Endothelial cell of umbilical vein (primary cell): ENCODE measurements at regions of chr15 and their contacts with region 1.

Region 1: DNA sequence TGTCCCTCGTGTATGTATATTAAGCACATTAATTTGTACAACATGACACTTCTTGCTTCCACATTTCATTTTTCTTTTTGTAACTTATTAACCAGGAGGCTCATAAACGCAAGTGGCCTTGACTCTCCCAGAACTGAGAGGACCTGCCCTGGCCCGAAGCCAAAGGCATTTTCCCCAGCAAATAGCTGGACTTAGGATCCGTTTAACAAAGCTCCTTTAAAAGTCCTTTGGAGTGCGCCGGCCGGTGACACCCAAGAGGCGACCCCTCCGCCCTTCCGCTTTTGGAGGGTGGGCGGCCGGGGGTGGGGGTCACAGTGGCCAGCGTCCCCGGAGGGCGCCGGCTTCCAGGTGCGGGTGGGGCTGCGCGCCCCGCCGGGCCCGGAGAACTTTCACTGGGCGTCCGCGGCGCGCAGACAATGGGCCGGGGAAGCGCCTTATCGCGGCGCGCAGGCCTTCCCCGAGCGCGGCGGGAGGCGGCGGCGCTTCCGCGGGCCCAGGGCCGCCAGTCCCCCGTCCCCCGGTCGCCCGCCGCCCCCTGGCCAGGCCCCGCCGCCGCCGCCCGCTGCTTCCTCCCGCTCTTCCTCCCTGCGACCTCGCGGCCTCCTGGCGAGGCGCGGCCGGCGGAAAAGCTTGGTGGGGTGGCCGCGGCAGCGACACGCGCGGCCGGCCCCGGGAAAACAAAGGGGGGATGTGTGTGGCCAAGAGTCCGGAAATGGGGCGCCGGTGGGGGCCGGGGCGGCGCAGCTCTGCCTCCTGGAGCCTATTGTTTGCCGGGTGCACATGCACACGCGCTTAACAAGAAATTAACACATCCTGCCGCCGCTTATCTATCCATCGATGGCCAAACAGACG is 613.4 kb downstream of the MCTP2 start:
- DNase-seq: peak; percentile 98
- H3K4me3 ChIP-seq: peak overlapping the region in 1 of 3 experiments; percentile 31
- H3K27ac ChIP-seq: peak overlapping the region; percentile 100
- H3K4me1 ChIP-seq: peaks cover 60% of the 10 kb centered on the region
- H3K27me3 ChIP-seq: no peaks in the 10 kb centered on the region
- CTCF ChIP-seq: peak in 1 of 2 donors; percentile 36
- POLR2A ChIP-seq: peak; percentile 62

Region 2: DNA sequence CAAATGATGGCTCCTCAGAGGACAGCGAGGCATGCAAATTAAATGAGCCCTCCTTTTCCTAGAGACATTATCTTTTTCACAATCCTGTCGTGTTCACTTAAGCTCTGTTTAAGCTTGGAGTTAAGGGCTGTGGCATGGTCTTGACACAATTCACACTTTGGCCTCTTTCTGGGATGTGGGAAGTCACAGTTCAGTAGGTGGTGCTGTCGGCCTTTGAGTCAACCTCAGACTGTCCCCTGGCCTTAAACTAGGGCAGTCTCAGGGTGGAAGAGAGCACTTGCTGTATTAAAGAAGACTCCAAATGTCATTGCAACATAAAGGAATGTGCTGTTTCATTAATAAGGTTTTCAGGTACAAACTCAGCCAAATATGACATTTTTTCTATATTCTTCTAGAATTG is 262.4 kb before region 1 on chr15:
- CTCF ChIA-PET with region 1: interaction called, 23 read pairs
- POLR2A ChIA-PET with region 1: no interaction called
- dilution Hi-C with region 1: no loop called
- intact Hi-C with region 1: loop called (anchors 1 kb)
- DNase-seq: peak; percentile 85
- H3K4me3 ChIP-seq: no peak overlapping the region
- H3K27ac ChIP-seq: no peak overlapping the region
- H3K4me1 ChIP-seq: peaks cover 25% of the 10 kb centered on the region
- H3K27me3 ChIP-seq: no peaks in the 10 kb centered on the region
- CTCF ChIP-seq: peak; percentile 75 to 80
- POLR2A ChIP-seq: no peak

Region 3: DNA sequence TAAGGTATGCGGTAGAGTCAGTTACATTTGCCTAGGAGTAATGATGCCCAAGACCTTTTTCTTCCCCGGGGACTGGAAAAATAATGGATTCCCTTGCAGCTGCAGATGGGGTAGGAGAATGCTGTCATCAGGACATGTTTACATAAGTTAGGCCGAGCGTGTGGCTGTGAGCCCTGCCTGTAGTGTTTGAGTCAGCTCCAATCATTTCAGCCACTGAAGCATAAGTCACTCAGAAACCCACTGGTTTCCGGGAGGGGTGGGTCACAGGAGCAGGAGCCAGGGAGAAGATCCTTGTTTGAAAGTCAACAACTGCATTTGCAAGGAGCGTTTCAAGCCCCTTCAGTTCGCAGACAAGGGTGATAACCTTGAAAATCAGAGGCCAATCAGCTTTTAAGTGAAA is 51.1 kb before region 1 on chr15:
- CTCF ChIA-PET with region 1: interaction called, 13 read pairs
- POLR2A ChIA-PET with region 1: no interaction called
- dilution Hi-C with region 1: no loop called
- intact Hi-C with region 1: loop called (anchors 2 kb)
- DNase-seq: no peak
- H3K4me3 ChIP-seq: no peak overlapping the region
- H3K27ac ChIP-seq: no peak overlapping the region
- H3K4me1 ChIP-seq: peaks cover 12% of the 10 kb centered on the region
- H3K27me3 ChIP-seq: no peaks in the 10 kb centered on the region
- CTCF ChIP-seq: no peak
- POLR2A ChIP-seq: no peak

Region 4: GRCh38 chr15:95025924-95026728 is 181.4 kb after region 1 on chr15:
- CTCF ChIA-PET with region 1: interaction called, 23 read pairs
- POLR2A ChIA-PET with region 1: interaction called, 7 read pairs
- dilution Hi-C with region 1: no loop called
- intact Hi-C with region 1: no loop called
- DNase-seq: peak; percentile 78
- H3K4me3 ChIP-seq: no peak overlapping the region
- H3K27ac ChIP-seq: no peak overlapping the region
- H3K4me1 ChIP-seq: peaks cover 2% of the 10 kb centered on the region
- H3K27me3 ChIP-seq: no peaks in the 10 kb centered on the region
- CTCF ChIP-seq: peak; percentile 62 to 76
- POLR2A ChIP-seq: no peak

Region 5: DNA sequence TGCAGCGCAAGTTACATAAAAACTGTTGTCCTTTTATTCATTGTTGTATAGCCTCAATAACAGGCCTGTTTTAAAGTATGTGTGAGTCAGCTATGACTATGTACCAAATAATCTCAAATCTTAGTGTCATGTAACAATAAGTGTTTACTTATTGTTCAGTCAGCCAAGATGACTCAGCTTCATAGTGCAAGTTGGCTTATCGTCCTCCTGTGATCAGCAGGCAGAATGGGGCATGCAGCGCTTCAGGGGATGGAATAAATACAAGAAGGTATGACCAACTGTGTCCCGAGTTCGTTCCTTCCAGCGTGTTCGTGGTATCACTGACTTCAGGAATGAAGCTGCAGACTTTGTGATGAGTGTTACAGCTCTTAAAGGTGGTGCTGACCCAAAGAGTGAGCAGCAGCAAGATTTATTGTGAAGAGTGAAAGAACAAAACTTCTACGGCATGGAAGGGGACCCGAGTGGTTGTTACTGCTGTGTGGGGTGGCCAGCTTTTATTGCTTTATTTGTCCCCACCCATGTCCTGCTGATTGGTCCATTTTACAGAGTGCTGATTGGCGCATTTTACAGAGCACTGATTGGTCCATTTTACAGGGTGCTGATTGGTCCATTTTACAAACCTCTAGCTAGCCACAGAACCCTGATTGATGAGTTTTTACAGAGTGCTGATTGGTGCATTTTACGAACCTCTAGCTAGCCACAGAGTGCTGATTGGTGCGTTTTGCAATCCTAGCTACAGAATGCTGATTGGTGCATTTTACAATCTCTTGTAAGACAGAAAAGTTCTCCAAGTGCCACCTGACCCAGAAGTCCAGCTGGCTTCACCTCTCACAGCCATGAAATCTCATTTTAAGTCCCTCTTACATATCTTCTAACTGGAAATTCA is 402.6 kb after region 1 on chr15:
- CTCF ChIA-PET with region 1: no interaction called
- POLR2A ChIA-PET with region 1: no interaction called
- dilution Hi-C with region 1: no loop called
- intact Hi-C with region 1: loop called (anchors 1 kb)
- DNase-seq: peak; percentile 91
- H3K4me3 ChIP-seq: no peak overlapping the region
- H3K27ac ChIP-seq: peak overlapping the region; percentile 53
- H3K4me1 ChIP-seq: peaks cover 15% of the 10 kb centered on the region
- H3K27me3 ChIP-seq: no peaks in the 10 kb centered on the region
- CTCF ChIP-seq: no peak
- POLR2A ChIP-seq: peak; percentile 16

Region 6: GRCh38 chr15:95365511-95366107 is 520.8 kb after region 1 on chr15:
- CTCF ChIA-PET with region 1: no interaction called
- POLR2A ChIA-PET with region 1: no interaction called
- dilution Hi-C with region 1: no loop called
- intact Hi-C with region 1: loop called (anchors 1 kb)
- DNase-seq: peak; percentile 100
- H3K4me3 ChIP-seq: no peak overlapping the region
- H3K27ac ChIP-seq: peak overlapping the region; percentile 98
- H3K4me1 ChIP-seq: peaks cover 37% of the 10 kb centered on the region
- H3K27me3 ChIP-seq: no peaks in the 10 kb centered on the region
- CTCF ChIP-seq: no peak
- POLR2A ChIP-seq: peak; percentile 87

Region 7: DNA sequence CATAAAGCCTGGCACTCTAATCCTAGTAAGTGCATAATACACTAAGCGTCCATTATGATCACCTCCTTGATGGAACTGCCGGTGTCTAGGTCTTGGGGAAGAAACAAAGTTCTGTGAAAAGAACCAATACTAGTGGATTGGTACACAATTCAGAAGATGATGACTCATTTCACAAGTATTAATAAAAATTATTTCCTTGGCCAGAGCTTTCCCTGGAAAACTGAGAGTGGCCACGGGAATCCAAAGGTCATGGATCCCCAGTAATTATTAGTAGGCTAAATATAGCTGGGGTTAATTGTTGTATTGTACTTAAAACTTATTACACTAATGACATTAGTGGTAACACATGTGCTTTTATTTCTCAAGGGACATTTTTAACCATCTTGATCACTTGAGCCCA is 677.8 kb after region 1 on chr15:
- CTCF ChIA-PET with region 1: no interaction called
- POLR2A ChIA-PET with region 1: no interaction called
- dilution Hi-C with region 1: no loop called
- intact Hi-C with region 1: no loop called
- DNase-seq: peak; percentile 39
- H3K4me3 ChIP-seq: no peak overlapping the region
- H3K27ac ChIP-seq: no peak overlapping the region
- H3K4me1 ChIP-seq: no peaks in the 10 kb centered on the region
- H3K27me3 ChIP-seq: no peaks in the 10 kb centered on the region
- CTCF ChIP-seq: no peak
- POLR2A ChIP-seq: no peak

Region 8: DNA sequence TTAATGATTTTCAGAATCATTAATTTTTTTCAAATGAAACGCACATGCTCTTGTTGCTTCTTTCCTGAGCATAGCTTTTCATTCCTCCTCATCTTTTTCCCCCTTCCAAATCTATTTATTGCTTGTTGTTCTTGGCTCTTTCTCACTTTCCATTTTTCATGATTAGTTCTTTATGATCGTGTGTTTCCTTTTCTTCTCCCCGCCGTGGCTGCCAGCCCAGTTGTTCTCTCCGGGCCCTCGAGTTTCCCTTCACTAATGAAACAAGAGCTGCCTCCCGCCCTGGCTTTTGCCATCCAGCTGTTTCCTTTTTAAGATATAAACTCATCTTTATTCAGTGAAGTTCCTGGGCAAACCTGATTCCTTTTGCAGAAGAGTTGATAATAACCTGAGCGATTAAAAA is 1315.5 kb after region 1 on chr15:
- CTCF ChIA-PET with region 1: no interaction called
- POLR2A ChIA-PET with region 1: no interaction called
- dilution Hi-C with region 1: no loop called
- intact Hi-C with region 1: loop called (anchors 10 kb)
- DNase-seq: peak; percentile 95
- H3K4me3 ChIP-seq: peak overlapping the region in 1 of 3 experiments; percentile 26
- H3K27ac ChIP-seq: peak overlapping the region; percentile 28
- H3K4me1 ChIP-seq: peaks cover 33% of the 10 kb centered on the region
- H3K27me3 ChIP-seq: no peaks in the 10 kb centered on the region
- CTCF ChIP-seq: no peak
- POLR2A ChIP-seq: no peak